Activated CD4-positive, alpha-beta T cell treated with anti-CD3 and anti-CD28 coated beads, Interleukin-2, amount 10 ng/mL, durations not matched to agents 7 days and 5 days (primary cell): ENCODE measurements at regions of chr14 and their contacts with region 1.

Region 1: GRCh38 chr14:78924864-78925263 is 754.7 kb downstream of the NRXN3 start:
- DNase-seq: no peak
- H3K4me3 Mint-ChIP-seq: no peak overlapping the region
- H3K27ac Mint-ChIP-seq: no peak overlapping the region
- H3K4me1 Mint-ChIP-seq: no peaks in the 10 kb centered on the region
- H3K27me3 Mint-ChIP-seq: no peaks in the 10 kb centered on the region

Region 2: GRCh38 chr14:78950649-78951048 is 25.8 kb after region 1 on chr14:
- CTCF ChIA-PET with region 1: no interaction called
- POLR2A ChIA-PET with region 1: no interaction called
- DNase-seq: no peak
- H3K4me3 Mint-ChIP-seq: no peak overlapping the region
- H3K27ac Mint-ChIP-seq: no peak overlapping the region
- H3K4me1 Mint-ChIP-seq: no peaks in the 10 kb centered on the region
- H3K27me3 Mint-ChIP-seq: peaks cover 9% of the 10 kb centered on the region

Region 3: GRCh38 chr14:80844872-80845271 is 1920.0 kb after region 1 on chr14:
- CTCF ChIA-PET with region 1: no interaction called
- POLR2A ChIA-PET with region 1: interaction called, 11 read pairs
- DNase-seq: no peak
- H3K4me3 Mint-ChIP-seq: no peak overlapping the region
- H3K27ac Mint-ChIP-seq: no peak overlapping the region
- H3K4me1 Mint-ChIP-seq: no peaks in the 10 kb centered on the region
- H3K27me3 Mint-ChIP-seq: no peaks in the 10 kb centered on the region